Mucosa of descending colon (tissue), 3 donors: ENCODE measurements at regions of chr19 and their contacts with region 1.

Region 1: GRCh38 chr19:19821366-19821951 is at the start of gene ZNF506:
- DNase-seq: peak; percentile 97 to 100 (median 98)
- ATAC-seq: peak; percentile 99
- H3K4me3 ChIP-seq: peak within 1 kb of the TSS; percentile 67
- H3K4me1 ChIP-seq: peaks cover 7% of the 10 kb centered on the region
- CTCF ChIP-seq: no peak
- total RNA-seq, gene ZNF506: 18.4 to 31.7 (median 25.7) TPM

Region 2: GRCh38 chr19:19865739-19866481 is 44.5 kb after region 1 on chr19 and contains the start of gene ZNF253:
- intact Hi-C with region 1: loop called in 1 of 2 experiments (anchors 5 kb)
- DNase-seq: peak; percentile 96 to 98 (median 97)
- ATAC-seq: peak; percentile 99
- H3K4me3 ChIP-seq: peak within 1 kb of the TSS; percentile 56
- H3K4me1 ChIP-seq: peaks cover 5% of the 10 kb centered on the region
- CTCF ChIP-seq: no peak
- total RNA-seq, gene ZNF253: 7.8 to 11.9 (median 9.4) TPM

Region 3: DNA sequence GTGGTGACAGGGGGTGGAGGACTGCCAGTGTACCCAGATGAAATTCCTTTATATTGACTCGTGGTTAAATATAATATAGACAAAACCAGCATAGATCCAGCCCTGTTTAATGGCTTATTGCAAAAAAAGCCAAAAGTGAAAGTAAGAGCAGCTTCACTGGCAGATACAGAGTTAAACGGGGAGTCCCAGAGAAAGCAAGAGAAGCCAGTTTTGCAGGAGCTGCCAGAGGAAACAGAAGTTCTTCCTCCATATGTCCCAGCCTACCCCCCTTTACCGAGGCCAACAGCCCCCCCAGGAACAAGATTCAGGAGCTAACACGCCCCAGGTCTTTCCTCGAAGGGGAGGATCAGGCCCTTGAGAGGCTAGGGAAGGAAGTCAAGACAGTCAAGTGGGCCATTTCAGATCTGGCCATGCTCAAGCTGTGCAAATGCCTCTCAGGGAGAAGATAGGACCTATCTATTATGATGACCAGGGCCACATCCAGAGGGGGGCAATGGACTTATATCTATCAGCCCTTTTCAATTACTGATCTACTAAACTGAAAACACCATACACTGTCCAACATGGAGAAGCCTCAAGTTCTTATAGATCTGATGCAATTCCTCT is 791.4 kb after region 1 on chr19:
- intact Hi-C with region 1: no loop called
- DNase-seq: no peak
- ATAC-seq: no peak
- H3K4me3 ChIP-seq: no peak overlapping the region
- H3K4me1 ChIP-seq: no peaks in the 10 kb centered on the region
- CTCF ChIP-seq: no peak